Endothelial cell of umbilical vein (primary cell): ENCODE measurements at regions of chr2 and their contacts with region 1.

Region 1: DNA sequence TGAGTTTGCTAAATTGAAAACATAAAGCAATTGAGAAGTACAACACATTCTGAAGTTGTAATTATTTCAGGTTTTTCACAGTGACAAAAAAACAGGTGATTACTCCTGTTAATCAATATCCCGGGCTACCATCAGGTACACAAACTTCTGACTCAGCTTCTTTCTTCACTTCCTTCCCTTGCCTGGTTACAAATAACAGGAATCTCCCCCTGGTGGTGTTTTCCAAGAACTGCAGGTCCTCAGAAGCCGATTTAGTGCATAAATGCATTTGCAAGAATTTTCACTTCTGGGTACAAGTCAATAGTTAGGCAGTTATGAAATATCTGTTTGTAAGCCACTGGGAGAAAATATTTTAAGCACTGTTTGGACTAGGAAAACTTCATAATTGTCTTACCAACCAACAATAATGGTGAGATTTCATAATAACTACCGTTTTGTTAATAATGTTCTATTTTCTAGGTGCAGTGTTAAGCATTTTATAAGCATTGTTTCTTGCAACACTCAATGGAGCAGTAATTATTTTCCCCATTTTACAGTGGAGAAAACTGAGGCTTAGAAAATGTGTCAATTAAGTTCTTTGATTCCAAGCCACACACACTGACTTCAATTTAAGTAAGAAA is 12.4 kb upstream of the GMCL1 start:
- DNase-seq: peak; percentile 88
- H3K4me3 ChIP-seq: no peak overlapping the region
- H3K27ac ChIP-seq: no peak overlapping the region
- H3K4me1 ChIP-seq: peaks cover 28% of the 10 kb centered on the region
- H3K27me3 ChIP-seq: no peaks in the 10 kb centered on the region
- CTCF ChIP-seq: peak; percentile 71 to 72
- POLR2A ChIP-seq: no peak

Region 2: GRCh38 chr2:69436938-69437750 is 379.9 kb before region 1 on chr2 and contains the start of gene NFU1:
- CTCF ChIA-PET with region 1: no interaction called
- POLR2A ChIA-PET with region 1: no interaction called
- dilution Hi-C with region 1: no loop called
- intact Hi-C with region 1: loop called (anchors 5 kb)
- DNase-seq: peak; percentile 98
- H3K4me3 ChIP-seq: peak within 1 kb of the TSS; percentile 74 to 92 (median 78)
- H3K27ac ChIP-seq: peak within 1 kb of the TSS; percentile 87
- H3K4me1 ChIP-seq: peaks cover 9% of the 10 kb centered on the region
- H3K27me3 ChIP-seq: no peaks in the 10 kb centered on the region
- CTCF ChIP-seq: peak; percentile 62 to 86
- POLR2A ChIP-seq: peak; percentile 98
- total RNA-seq, gene NFU1: 47.9 and 49.7 TPM in 2 replicates

Region 3: DNA sequence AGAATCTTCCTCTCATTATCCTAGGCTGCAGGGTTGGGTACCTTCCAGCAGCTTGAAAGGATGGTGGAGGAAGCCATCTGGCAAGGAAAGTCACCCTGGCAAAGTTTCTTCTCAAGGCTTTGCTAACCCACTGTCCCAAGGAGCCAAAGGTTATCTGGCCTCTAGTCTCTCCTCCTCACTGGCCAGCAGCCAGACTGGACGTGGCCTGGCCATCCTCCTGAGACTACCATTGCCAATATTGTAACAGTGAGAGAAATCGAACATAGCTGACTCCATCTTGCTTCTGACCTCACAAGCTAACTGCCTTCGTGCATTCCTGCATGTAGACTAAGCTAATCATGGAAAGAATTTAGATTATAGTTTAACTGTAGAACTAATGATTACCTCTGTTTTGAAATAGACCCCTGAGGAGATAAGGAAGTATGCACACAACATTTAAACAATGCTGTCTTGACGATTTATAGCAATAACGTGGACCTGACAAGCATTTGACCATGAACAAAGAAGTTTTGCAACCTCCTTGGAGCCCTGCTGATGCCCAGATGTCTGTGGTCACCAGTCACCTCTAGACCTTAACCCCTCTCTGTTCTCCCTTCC is 82.9 kb before region 1 on chr2:
- CTCF ChIA-PET with region 1: interaction called, 29 read pairs
- POLR2A ChIA-PET with region 1: no interaction called
- dilution Hi-C with region 1: no loop called
- intact Hi-C with region 1: no loop called
- DNase-seq: no peak
- H3K4me3 ChIP-seq: no peak overlapping the region
- H3K27ac ChIP-seq: no peak overlapping the region
- H3K4me1 ChIP-seq: no peaks in the 10 kb centered on the region
- H3K27me3 ChIP-seq: peaks cover 0 to 2% of the 10 kb centered on the region in 2 experiments
- CTCF ChIP-seq: no peak
- POLR2A ChIP-seq: no peak

Region 4: DNA sequence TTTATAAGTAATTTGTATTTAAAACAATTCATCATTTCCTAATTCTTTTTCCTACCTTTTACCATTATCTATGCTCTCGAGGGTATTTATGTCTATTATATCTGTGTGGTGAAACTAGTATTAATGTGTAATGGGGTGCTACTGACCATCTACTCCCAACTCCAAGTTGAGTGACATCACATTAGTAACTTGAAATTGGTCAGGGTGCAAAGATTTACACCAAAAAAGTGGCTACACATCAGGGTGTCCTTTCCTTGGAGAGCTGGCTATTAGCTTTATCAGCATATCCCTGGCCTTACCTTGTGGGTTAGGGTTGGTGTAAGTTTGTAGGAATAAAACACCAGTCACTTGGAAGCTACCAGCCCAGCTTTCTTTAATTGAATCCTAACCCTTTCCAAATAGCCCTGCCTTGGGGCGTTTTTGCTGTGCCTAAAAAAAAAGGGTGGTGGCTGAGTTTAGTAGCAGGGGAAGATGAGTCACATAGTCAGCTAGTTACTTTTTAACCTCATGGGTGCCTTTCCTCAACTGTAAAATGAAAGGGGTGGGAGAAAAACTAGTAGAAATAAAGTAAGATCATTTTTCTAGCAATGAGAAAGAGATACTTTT is 61.1 kb before region 1 on chr2:
- CTCF ChIA-PET with region 1: interaction called, 23 read pairs
- POLR2A ChIA-PET with region 1: no interaction called
- dilution Hi-C with region 1: no loop called
- intact Hi-C with region 1: no loop called
- DNase-seq: peak; percentile 13
- H3K4me3 ChIP-seq: no peak overlapping the region
- H3K27ac ChIP-seq: no peak overlapping the region
- H3K4me1 ChIP-seq: peaks cover 4% of the 10 kb centered on the region
- H3K27me3 ChIP-seq: no peaks in the 10 kb centered on the region
- CTCF ChIP-seq: no peak
- POLR2A ChIP-seq: no peak

Region 5: GRCh38 chr2:69781321-69782248 is 35.4 kb before region 1 on chr2:
- CTCF ChIA-PET with region 1: interaction called, 13 read pairs
- POLR2A ChIA-PET with region 1: no interaction called
- dilution Hi-C with region 1: no loop called
- intact Hi-C with region 1: no loop called
- DNase-seq: peak; percentile 74
- H3K4me3 ChIP-seq: no peak overlapping the region
- H3K27ac ChIP-seq: no peak overlapping the region
- H3K4me1 ChIP-seq: peaks cover 9% of the 10 kb centered on the region
- H3K27me3 ChIP-seq: no peaks in the 10 kb centered on the region
- CTCF ChIP-seq: no peak
- POLR2A ChIP-seq: peak; percentile 19

Region 6: GRCh38 chr2:69798909-69799526 is 18.0 kb before region 1 on chr2:
- CTCF ChIA-PET with region 1: interaction called, 106 read pairs
- POLR2A ChIA-PET with region 1: no interaction called
- dilution Hi-C with region 1: no loop called
- intact Hi-C with region 1: no loop called
- DNase-seq: peak; percentile 77
- H3K4me3 ChIP-seq: peak overlapping the region in 2 of 3 experiments; percentile 2 to 61
- H3K27ac ChIP-seq: peak overlapping the region; percentile 69
- H3K4me1 ChIP-seq: peaks cover 20% of the 10 kb centered on the region
- H3K27me3 ChIP-seq: no peaks in the 10 kb centered on the region
- CTCF ChIP-seq: no peak
- POLR2A ChIP-seq: no peak

Region 7: GRCh38 chr2:70069049-70069448 is 252.0 kb after region 1 on chr2:
- CTCF ChIA-PET with region 1: no interaction called
- POLR2A ChIA-PET with region 1: no interaction called
- dilution Hi-C with region 1: no loop called
- intact Hi-C with region 1: no loop called
- DNase-seq: no peak
- H3K4me3 ChIP-seq: no peak overlapping the region
- H3K27ac ChIP-seq: no peak overlapping the region
- H3K4me1 ChIP-seq: peaks cover 3% of the 10 kb centered on the region
- H3K27me3 ChIP-seq: no peaks in the 10 kb centered on the region
- CTCF ChIP-seq: no peak
- POLR2A ChIP-seq: no peak